Activated CD4-positive, alpha-beta memory T cell treated with anti-CD3 and anti-CD28 coated beads for 36 hours (primary cell): ENCODE measurements at regions of chr22 and their contacts with region 1.

Region 1: DNA sequence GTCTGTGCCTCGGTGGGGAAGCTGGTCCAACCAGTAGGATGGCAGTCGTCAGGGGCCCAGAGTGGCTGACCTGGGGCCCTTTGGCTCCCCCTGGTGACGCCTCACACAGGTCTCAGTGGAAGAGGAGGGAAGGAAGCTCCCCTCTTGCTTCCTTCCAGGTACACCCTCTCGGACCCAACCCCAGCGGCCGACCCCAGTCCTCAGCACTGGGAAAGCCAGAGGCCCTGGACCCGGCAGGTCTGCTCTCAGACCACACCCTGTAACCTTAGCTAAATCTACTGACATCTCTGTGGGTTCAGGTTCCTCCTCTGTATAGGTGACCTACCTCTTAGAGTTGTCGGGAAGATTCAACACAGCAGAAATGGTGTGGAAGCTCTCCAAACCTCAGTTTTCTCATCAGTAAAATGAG is 3.4 kb upstream of the SCUBE1 start:
- DNase-seq: peak; percentile 75
- H3K4me3 Mint-ChIP-seq: no peak overlapping the region
- H3K27ac Mint-ChIP-seq: no peak overlapping the region
- H3K4me1 Mint-ChIP-seq: peaks cover 12% of the 10 kb centered on the region
- H3K27me3 Mint-ChIP-seq: peaks cover 44% of the 10 kb centered on the region

Region 2: DNA sequence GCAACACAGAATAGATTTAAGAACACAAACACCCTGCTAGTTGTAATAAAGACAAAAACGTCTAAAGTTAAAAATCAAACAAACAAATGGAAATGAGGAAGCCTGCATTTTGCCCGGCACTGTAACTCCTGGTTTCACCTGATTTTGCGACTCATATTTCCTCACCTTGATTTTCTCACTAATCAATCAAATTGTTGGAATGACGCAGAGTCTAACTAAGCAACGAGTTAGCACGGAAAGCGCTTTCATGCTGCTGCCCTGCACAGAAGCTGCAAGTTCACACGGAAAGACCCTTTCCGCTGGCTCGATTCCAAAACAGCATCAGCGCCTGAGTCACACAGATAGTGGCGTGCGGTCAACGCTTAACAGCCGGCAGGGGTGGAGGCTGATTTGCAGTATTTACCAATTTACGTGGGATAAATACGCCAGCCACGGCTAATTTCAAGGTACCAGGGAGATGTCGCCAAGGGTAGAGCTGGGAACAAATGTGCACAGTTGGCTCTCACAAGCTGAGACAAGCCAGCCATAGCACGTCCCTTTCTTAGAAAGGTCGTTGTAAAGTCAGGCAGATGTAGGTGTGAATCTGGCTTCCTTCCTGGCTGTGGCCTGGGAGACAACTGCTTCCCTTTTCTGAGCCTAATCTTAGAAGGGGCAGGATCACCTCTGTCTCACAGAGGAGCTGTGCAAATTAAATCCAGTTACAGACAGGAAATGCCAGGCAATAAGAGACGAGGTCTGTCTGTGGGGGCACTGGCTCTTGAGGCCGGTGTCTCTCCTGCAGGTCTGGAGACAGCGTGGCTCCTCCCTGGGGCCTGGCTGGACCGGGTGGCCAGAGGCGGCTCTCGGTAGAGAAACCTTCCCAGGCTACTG is 82.6 kb before region 1 on chr22:
- CTCF ChIA-PET with region 1: interaction called, 156 read pairs
- POLR2A ChIA-PET with region 1: no interaction called
- intact Hi-C with region 1: no loop called
- DNase-seq: peak; percentile 93
- H3K4me3 Mint-ChIP-seq: peak overlapping the region; percentile 39
- H3K27ac Mint-ChIP-seq: peak overlapping the region; percentile 65
- H3K4me1 Mint-ChIP-seq: peaks cover 25% of the 10 kb centered on the region
- H3K27me3 Mint-ChIP-seq: no peaks in the 10 kb centered on the region

Region 3: GRCh38 chr22:43320943-43321900 is 25.3 kb before region 1 on chr22:
- CTCF ChIA-PET with region 1: interaction called, 11 read pairs
- POLR2A ChIA-PET with region 1: no interaction called
- intact Hi-C with region 1: no loop called
- DNase-seq: no peak
- H3K4me3 Mint-ChIP-seq: no peak overlapping the region
- H3K27ac Mint-ChIP-seq: no peak overlapping the region
- H3K4me1 Mint-ChIP-seq: no peaks in the 10 kb centered on the region
- H3K27me3 Mint-ChIP-seq: no peaks in the 10 kb centered on the region

Region 4: DNA sequence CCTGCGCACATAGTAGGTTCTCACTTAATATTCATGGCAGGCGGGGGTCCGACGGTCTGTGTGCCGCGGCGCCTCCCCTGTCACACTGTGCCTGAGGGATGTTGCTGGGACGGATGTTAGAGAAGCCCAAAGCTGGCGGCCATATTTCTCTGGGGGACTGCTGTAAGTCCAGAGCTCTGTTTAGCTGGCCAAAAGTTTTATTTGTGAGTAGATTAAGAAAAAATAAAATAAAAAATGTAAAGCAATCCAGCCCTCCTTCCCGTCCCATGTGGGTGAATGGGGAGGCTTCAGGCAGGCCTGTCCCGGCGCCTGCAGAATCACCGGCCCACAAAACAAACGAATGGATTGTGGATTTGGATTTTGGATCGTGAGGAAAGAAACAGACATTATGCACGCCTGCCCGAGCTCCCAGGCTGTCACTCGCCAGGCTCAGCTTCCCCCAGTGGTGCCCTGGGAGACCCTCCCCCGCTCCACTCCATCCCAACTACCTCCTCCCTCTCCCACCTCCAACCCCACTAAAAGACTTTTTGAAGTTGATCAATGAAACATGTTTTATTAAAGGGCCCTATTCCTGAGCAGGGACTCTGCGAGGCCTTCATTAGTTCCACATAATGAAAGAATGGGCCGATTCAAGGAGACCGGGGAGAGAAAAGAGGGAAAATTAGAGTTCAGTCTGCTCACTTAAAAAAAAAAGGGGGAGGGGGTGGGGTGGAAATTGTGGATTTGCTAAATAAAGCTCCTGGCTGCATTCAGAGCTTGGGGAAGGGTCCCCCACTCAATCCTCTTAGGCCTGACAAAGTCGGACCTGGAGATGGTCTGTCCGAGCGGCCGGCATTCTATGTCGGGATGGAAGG is 17.0 kb after region 1 on chr22:
- CTCF ChIA-PET with region 1: interaction called, 11 read pairs
- POLR2A ChIA-PET with region 1: interaction called, 4 read pairs
- intact Hi-C with region 1: no loop called
- DNase-seq: no peak
- H3K4me3 Mint-ChIP-seq: no peak overlapping the region
- H3K27ac Mint-ChIP-seq: no peak overlapping the region
- H3K4me1 Mint-ChIP-seq: no peaks in the 10 kb centered on the region
- H3K27me3 Mint-ChIP-seq: peaks cover 11% of the 10 kb centered on the region

Region 5: DNA sequence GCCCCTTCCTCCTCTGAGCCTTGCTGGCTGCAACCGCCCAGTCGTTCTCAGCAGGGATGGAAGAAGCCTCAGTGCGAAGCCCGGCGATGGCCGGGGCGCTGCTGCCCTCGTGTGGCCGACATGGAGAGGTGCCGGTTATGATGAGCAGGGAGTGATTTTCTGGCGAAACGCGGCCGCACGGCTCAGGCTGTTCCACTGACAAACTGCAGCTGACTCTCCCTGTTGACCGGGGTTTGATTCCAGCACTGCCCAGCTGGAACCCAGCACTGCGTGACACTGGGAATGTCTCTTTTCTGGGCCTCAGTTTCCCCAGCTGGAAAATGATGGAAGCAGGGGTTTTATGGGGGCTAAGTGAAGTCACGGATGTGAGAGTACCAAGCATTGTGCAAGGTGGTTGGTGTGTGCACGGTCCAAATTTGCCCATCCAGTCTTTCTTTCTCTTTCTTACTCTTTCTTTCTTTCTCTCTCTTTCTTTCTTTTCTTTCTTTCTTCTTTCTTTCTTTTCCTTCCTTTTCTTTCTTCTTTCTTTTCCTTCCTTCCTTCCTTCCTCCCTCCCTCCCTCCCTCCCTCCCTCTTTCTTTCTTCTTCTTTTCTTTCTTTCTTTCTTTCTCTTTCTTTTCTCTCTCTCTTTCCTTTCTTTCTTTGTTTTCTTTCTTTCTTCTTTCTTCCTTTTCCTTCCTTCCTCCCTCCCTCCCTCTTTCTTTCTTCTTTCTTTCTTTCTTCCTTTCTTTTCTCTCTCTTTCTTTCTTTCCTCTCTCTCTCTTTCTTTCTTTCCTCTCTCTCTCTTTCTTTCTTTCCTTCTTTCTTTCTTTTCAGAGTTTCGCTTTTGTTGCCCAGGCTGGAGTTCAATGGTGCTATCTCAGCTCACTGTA is 39.5 kb after region 1 on chr22:
- CTCF ChIA-PET with region 1: interaction called, 14 read pairs
- POLR2A ChIA-PET with region 1: no interaction called
- intact Hi-C with region 1: no loop called
- DNase-seq: peak; percentile 80
- H3K4me3 Mint-ChIP-seq: no peak overlapping the region
- H3K27ac Mint-ChIP-seq: no peak overlapping the region
- H3K4me1 Mint-ChIP-seq: peaks cover 6% of the 10 kb centered on the region
- H3K27me3 Mint-ChIP-seq: peaks cover 11% of the 10 kb centered on the region